MCF 10A (cell line): ENCODE measurements at regions of chr12 and their contacts with region 1.

Region 1: GRCh38 chr12:67534681-67535080 is 113.9 kb upstream of the DYRK2 start:
- DNase-seq: peak; percentile 79
- H3K4me3 Mint-ChIP-seq: no peak overlapping the region
- H3K27ac Mint-ChIP-seq: peak overlapping the region; percentile 40
- H3K4me1 Mint-ChIP-seq: peaks cover 28% of the 10 kb centered on the region
- H3K27me3 Mint-ChIP-seq: no peaks in the 10 kb centered on the region
- CTCF ChIP-seq: no peak

Region 2: DNA sequence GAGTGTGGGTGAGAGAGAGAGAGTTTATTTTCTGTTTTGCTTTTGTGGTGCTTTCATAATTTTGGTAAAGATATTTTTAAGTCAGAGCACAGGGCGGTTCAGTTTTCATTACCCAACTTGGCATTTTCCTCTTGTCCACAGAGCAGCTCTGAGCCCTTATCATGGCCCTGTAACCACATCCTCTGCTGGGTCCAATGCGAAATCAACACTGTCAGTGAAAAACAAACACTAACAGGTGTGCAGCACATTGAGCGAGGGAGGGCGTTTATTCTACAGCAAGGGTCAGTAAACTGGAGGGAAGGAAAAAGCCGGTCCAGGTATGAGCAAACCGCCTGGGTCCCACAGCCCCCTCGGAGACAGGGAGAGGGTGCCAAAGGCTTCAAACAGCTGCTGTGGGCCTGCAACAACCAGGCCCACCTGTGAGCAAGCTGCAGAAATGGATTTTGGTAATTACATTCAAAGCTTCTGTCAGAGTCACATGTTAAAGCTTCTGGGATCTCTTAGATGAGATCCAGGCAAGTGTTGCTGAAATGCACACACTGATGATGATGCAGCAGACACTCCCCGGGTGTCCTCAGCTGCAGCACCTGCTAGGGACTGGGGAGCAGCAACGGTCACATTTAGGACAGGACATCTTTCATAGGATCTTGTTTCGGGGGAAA is 18.9 kb before region 1 on chr12:
- CTCF ChIA-PET with region 1: interaction called, 4 read pairs
- POLR2A ChIA-PET with region 1: interaction called, 3 read pairs
- intact Hi-C with region 1: loop called (anchors 1 kb)
- DNase-seq: no peak
- H3K4me3 Mint-ChIP-seq: no peak overlapping the region
- H3K27ac Mint-ChIP-seq: peak overlapping the region; percentile 13
- H3K4me1 Mint-ChIP-seq: peaks cover 16% of the 10 kb centered on the region
- H3K27me3 Mint-ChIP-seq: no peaks in the 10 kb centered on the region
- CTCF ChIP-seq: no peak